Posterior vena cava (tissue), 2 donors: ENCODE measurements at regions of chr9 and their contacts with region 1.

Region 1: GRCh38 chr9:29773676-29774075 is 2200.4 kb upstream of the C9orf72 start:
- DNase-seq: no peak

Region 2: GRCh38 chr9:29730163-29730562 is 43.5 kb before region 1 on chr9:
- intact Hi-C with region 1: no loop called
- DNase-seq: no peak

Region 3: GRCh38 chr9:29945012-29945411 is 171.3 kb after region 1 on chr9:
- intact Hi-C with region 1: no loop called
- DNase-seq: no peak

Region 4: DNA sequence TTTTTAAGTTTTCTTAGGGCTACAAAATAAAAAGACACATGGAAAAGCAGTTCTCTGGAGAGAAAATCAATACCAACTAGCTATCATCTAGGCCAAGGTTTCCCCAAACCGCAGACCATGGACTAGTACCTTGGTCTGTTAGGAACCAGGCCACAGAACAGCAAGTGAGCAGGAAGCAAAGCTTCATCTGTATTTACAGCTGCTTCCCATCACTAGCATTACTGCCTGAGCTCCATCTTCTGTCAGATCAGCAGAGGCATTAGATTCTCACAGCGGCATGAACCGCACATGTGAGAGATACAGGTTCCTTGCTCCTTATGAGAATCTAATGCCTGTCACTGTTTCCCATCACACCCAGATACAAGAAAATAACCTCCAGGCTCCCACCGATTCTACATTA is 703.1 kb after region 1 on chr9:
- intact Hi-C with region 1: loop called in 1 of 2 experiments (anchors 10 kb)
- DNase-seq: no peak